ENCODE measurements at regions of chr19 and their contacts with region 1.

Region 1: GRCh38 chr19:48363810-48364563 is at the starts of genes SYNGR4 and TMEM143:
- DNase-seq: peak; percentile 100
- ATAC-seq: peak; percentile 89
- H3K4me3 ChIP-seq: peak within 1 kb of the TSS; percentile 76 to 91 (median 85)
- H3K4me3 Mint-ChIP-seq: peak within 1 kb of the TSS; percentile 95
- H3K27ac ChIP-seq: peak within 1 kb of the TSS; percentile 93 to 97
- H3K27ac Mint-ChIP-seq: peak within 1 kb of the TSS; percentile 97
- H3K4me1 ChIP-seq: peaks cover 5 to 20% of the 10 kb centered on the region in 2 donors
- H3K4me1 Mint-ChIP-seq: peaks cover 15% of the 10 kb centered on the region
- H3K27me3 ChIP-seq: no peaks in the 10 kb centered on the region
- H3K27me3 Mint-ChIP-seq: no peaks in the 10 kb centered on the region
- CTCF ChIP-seq: no peak
- total RNA-seq, gene SYNGR4: not detected in 2 replicates
- total RNA-seq, gene TMEM143: 30.0 and 34.5 TPM in 2 replicates

Region 2: DNA sequence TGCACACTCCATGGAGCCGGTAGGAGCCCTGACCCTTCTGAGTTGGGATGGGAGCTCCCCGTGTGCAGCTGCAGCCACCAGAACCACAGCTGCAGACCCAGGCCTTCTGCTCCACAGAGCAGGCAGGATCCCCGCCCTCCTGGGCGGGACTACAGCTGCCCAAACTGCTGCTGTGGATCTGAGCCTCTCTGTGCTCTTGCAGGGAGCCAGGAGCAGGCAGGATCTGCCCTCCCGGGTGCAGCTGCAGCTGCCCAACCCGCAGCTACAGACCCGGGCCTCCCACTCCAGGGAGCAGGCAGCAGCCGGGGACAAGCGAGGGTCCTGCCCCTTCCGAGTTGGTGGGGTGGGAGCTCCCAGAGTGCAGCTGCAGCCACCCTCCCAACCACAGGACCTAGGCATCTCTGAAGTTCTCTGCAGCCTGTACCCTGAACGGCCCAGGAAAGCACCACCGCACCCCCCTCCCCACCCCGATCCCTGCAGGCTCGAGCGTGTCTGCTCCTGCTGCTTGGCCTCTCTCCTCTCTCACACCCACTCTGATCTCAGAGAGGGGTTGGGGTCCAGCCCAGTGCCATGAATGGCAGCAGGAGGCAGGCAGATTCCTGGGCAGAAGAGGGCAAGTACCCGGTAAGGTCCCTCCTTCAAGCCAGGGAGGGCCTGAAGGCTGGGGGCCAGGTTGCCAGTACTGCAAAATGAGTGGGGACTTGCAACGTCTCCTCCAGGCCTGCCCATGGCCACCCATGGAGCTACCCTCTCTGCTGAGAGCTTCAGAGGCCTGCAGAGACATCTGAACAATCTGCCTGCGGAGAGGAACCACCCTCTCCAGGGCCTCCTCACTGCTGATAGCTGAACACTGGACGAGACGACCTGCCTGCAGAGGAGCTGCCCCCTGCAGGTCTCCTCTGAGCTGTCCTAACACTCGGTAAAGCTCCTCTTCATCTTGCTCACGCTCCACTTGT is 55.1 kb before region 1 on chr19:
- CTCF ChIA-PET with region 1: no interaction called
- POLR2A ChIA-PET with region 1: no interaction called
- intact Hi-C with region 1: no loop called
- DNase-seq: no peak
- ATAC-seq: no peak
- H3K4me3 ChIP-seq: no peak overlapping the region
- H3K4me3 Mint-ChIP-seq: no peak overlapping the region
- H3K27ac ChIP-seq: no peak overlapping the region
- H3K27ac Mint-ChIP-seq: no peak overlapping the region
- H3K4me1 ChIP-seq: no peaks in the 10 kb centered on the region
- H3K4me1 Mint-ChIP-seq: no peaks in the 10 kb centered on the region
- H3K27me3 ChIP-seq: no peaks in the 10 kb centered on the region
- H3K27me3 Mint-ChIP-seq: peaks cover 13% of the 10 kb centered on the region
- CTCF ChIP-seq: no peak

Region 3: GRCh38 chr19:48391107-48391986 is 27.4 kb after region 1 on chr19 and contains the start of gene KDELR1:
- CTCF ChIA-PET with region 1: interaction called, 21 read pairs
- POLR2A ChIA-PET with region 1: interaction called, 12 read pairs
- intact Hi-C with region 1: loop called (anchors 1 kb)
- DNase-seq: peak; percentile 86
- ATAC-seq: peak; percentile 88
- H3K4me3 ChIP-seq: peak within 1 kb of the TSS; percentile 71 to 93 (median 85)
- H3K4me3 Mint-ChIP-seq: peak within 1 kb of the TSS; percentile 95
- H3K27ac ChIP-seq: peak within 1 kb of the TSS; percentile 79 to 80
- H3K27ac Mint-ChIP-seq: peak within 1 kb of the TSS; percentile 92
- H3K4me1 ChIP-seq: peaks cover 39 to 45% of the 10 kb centered on the region in 2 donors
- H3K4me1 Mint-ChIP-seq: peaks cover 24% of the 10 kb centered on the region
- H3K27me3 ChIP-seq: peaks cover 0 to 39% (median 23%) of the 10 kb centered on the region in 4 experiments
- H3K27me3 Mint-ChIP-seq: peaks cover 25% of the 10 kb centered on the region
- CTCF ChIP-seq: peak; percentile 88
- total RNA-seq, gene KDELR1: 60.5 and 62.7 TPM in 2 replicates

Region 4: GRCh38 chr19:48445606-48446481 is 81.9 kb after region 1 on chr19 and contains the start of gene GRWD1:
- CTCF ChIA-PET with region 1: no interaction called
- POLR2A ChIA-PET with region 1: no interaction called
- intact Hi-C with region 1: loop called (anchors 1 kb)
- DNase-seq: peak; percentile 96
- ATAC-seq: peak; percentile 87
- H3K4me3 ChIP-seq: peak within 1 kb of the TSS; percentile 64 to 99 (median 94)
- H3K4me3 Mint-ChIP-seq: peak within 1 kb of the TSS; percentile 97
- H3K27ac ChIP-seq: peak within 1 kb of the TSS; percentile 88 to 91
- H3K27ac Mint-ChIP-seq: peak within 1 kb of the TSS; percentile 98
- H3K4me1 ChIP-seq: peaks cover 22 to 27% of the 10 kb centered on the region in 2 donors
- H3K4me1 Mint-ChIP-seq: peaks cover 40% of the 10 kb centered on the region
- H3K27me3 ChIP-seq: peaks cover 0 to 24% (median 11%) of the 10 kb centered on the region in 4 experiments
- H3K27me3 Mint-ChIP-seq: peaks cover 22% of the 10 kb centered on the region
- CTCF ChIP-seq: no peak
- total RNA-seq, gene GRWD1: 38.6 and 40.7 TPM in 2 replicates

Region 5: DNA sequence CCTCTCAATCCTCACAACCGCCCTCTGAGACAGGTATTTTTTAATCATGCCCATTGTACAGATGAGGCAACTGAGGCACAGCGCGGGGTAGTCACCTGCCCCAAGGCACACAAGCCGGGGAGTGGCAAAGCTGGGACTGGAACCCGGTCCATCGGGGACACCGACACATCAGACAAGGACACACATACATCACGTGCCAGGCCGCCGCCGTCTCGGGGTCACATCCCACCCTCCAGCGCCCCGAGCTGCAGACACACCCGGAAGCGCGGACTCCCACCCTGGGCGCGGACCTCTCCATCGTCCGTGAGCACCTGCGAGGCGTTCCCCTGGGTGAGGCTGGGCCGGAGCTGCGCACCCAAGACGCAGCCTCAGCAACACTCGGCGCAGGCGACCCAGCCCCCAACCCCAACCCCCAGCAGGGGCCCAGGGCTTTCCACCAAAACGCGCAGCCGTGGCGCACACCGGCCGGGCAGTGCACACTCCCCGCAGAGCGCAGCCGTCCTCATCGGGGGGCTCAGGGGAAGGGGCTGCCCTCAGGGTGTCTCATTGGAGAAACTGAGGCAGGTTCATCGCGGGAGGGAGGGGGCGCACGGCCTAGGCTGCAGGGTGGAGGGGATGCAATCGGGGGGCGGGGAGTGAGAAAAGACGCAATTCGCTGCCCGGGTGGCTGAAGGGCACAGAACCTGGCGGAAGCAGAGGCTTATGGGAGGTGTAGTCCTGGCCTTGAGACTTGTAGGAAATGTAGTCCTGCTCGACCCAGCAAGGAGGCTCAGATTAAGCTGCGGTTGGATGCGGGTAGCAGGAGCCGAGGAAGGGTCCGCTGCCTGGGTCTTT is 149.5 kb after region 1 on chr19:
- CTCF ChIA-PET with region 1: no interaction called
- POLR2A ChIA-PET with region 1: no interaction called
- intact Hi-C with region 1: loop called (anchors 5 kb)
- DNase-seq: peak; percentile 78
- ATAC-seq: peak; percentile 84
- H3K4me3 ChIP-seq: peak overlapping the region; percentile 21 to 82 (median 73)
- H3K4me3 Mint-ChIP-seq: no peak overlapping the region
- H3K27ac ChIP-seq: no peak overlapping the region
- H3K27ac Mint-ChIP-seq: no peak overlapping the region
- H3K4me1 ChIP-seq: peaks cover 28 to 30% of the 10 kb centered on the region in 2 donors
- H3K4me1 Mint-ChIP-seq: peaks cover 15% of the 10 kb centered on the region
- H3K27me3 ChIP-seq: peaks cover 0 to 37% (median 14%) of the 10 kb centered on the region in 4 experiments
- H3K27me3 Mint-ChIP-seq: peaks cover 15% of the 10 kb centered on the region
- CTCF ChIP-seq: no peak

Region 6: DNA sequence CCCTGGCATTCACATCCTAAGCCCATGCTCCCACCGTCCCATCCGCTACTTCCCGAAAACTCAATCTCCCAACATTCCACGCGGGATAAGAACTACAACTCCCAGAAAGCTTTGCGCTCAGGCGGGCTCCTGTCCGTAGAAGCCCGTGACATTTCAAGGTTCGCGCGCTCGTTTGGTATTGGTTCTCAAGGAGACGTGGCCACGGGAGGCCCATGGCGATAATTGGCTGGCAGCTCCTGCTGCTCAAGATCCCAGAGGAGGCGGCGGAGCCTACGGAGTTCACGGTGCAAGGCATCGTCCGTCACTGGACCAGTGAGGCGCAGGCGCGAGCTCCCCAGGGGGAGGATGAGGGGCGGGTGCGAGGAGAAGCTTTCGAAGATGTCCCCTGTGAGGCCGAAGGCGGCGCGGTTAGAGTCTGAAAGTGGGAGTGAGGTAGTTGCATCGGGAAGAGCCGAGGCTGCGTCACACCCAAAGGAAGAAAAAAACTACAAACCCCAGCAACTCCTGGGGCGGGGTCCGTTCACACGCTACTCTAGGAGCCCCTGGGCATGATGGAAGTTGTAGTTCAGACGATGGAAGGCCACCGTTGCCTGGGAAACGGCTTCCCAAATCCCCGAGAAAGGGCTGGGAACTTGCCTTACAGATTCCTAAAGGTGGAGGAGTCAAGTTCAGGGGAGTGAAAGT is 356.8 kb after region 1 on chr19:
- CTCF ChIA-PET with region 1: no interaction called
- POLR2A ChIA-PET with region 1: no interaction called
- intact Hi-C with region 1: loop called (anchors 5 kb)
- DNase-seq: peak; percentile 93
- ATAC-seq: peak; percentile 86
- H3K4me3 ChIP-seq: peak overlapping the region; percentile 47 to 91 (median 75)
- H3K4me3 Mint-ChIP-seq: peak overlapping the region; percentile 98
- H3K27ac ChIP-seq: peak overlapping the region; percentile 92 to 93
- H3K27ac Mint-ChIP-seq: peak overlapping the region; percentile 98
- H3K4me1 ChIP-seq: peaks cover 10 to 25% of the 10 kb centered on the region in 2 donors
- H3K4me1 Mint-ChIP-seq: peaks cover 21% of the 10 kb centered on the region
- H3K27me3 ChIP-seq: no peaks in the 10 kb centered on the region
- H3K27me3 Mint-ChIP-seq: no peaks in the 10 kb centered on the region
- CTCF ChIP-seq: no peak

Measured in B cell (primary cell).